GM12878 (cell line): ENCODE measurements at regions of chr5 and their contacts with region 1.

Region 1: GRCh38 chr5:112684737-112685136 is 52.9 kb upstream of the APC start:
- DNase-seq: no peak
- ATAC-seq: no peak; the same call in 2 of the 3 replicates
- H3K4me3 ChIP-seq: no peak overlapping the region
- H3K27ac ChIP-seq: no peak overlapping the region
- H3K4me1 ChIP-seq: peaks cover 10% of the 10 kb centered on the region
- H3K27me3 ChIP-seq: peaks cover 0 to 2% of the 10 kb centered on the region in 2 experiments; a peak in 1 of 4 replicates
- CTCF ChIP-seq: no peak
- EP300 ChIP-seq: no peak
- POLR2A ChIP-seq: no peak
- RAD21 ChIP-seq: no peak

Region 2: GRCh38 chr5:112642885-112643284 is 41.9 kb before region 1 on chr5:
- CTCF ChIA-PET with region 1: no interaction called
- POLR2A ChIA-PET with region 1: no interaction called
- RAD21 ChIA-PET with region 1: no interaction called
- SMC1A ChIA-PET with region 1: interaction called, 10 read pairs
- in situ Hi-C with region 1: no loop called
- intact Hi-C with region 1: no loop called
- DNase-seq: no peak
- ATAC-seq: no peak
- H3K4me3 ChIP-seq: no peak overlapping the region
- H3K27ac ChIP-seq: no peak overlapping the region
- H3K4me1 ChIP-seq: no peaks in the 10 kb centered on the region
- H3K27me3 ChIP-seq: no peaks in the 10 kb centered on the region
- CTCF ChIP-seq: no peak
- EP300 ChIP-seq: no peak
- POLR2A ChIP-seq: no peak
- RAD21 ChIP-seq: no peak

Region 3: DNA sequence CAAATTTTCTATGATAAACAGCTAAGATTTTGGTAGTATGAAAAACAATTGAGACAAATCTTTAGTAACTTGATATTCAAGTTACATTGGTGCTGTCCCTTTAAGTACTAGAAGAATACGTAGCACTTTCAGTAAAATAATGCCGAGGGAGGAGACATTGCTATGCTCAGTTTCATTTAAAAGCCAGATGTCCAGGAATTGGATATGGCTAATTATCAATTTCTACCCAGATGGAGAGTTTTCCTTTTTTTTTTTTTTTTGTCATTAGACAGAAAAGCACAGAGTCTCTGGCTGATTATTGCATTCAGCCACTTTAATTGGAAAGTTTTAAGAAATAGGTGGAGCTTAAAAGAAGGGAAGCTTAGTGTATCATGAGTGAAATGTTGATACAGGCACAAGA is 12.6 kb after region 1 on chr5:
- CTCF ChIA-PET with region 1: interaction called, 14 read pairs
- POLR2A ChIA-PET with region 1: interaction called, 9 read pairs
- RAD21 ChIA-PET with region 1: interaction called, 7 read pairs
- SMC1A ChIA-PET with region 1: interaction called, 20 read pairs
- in situ Hi-C with region 1: no loop called
- intact Hi-C with region 1: no loop called
- DNase-seq: no peak
- ATAC-seq: no peak
- H3K4me3 ChIP-seq: no peak overlapping the region
- H3K27ac ChIP-seq: no peak overlapping the region
- H3K4me1 ChIP-seq: peaks cover 4% of the 10 kb centered on the region; the same call in 1 of the 2 replicates
- H3K27me3 ChIP-seq: no peaks in the 10 kb centered on the region
- CTCF ChIP-seq: no peak
- EP300 ChIP-seq: no peak
- POLR2A ChIP-seq: no peak
- RAD21 ChIP-seq: no peak

Region 4: DNA sequence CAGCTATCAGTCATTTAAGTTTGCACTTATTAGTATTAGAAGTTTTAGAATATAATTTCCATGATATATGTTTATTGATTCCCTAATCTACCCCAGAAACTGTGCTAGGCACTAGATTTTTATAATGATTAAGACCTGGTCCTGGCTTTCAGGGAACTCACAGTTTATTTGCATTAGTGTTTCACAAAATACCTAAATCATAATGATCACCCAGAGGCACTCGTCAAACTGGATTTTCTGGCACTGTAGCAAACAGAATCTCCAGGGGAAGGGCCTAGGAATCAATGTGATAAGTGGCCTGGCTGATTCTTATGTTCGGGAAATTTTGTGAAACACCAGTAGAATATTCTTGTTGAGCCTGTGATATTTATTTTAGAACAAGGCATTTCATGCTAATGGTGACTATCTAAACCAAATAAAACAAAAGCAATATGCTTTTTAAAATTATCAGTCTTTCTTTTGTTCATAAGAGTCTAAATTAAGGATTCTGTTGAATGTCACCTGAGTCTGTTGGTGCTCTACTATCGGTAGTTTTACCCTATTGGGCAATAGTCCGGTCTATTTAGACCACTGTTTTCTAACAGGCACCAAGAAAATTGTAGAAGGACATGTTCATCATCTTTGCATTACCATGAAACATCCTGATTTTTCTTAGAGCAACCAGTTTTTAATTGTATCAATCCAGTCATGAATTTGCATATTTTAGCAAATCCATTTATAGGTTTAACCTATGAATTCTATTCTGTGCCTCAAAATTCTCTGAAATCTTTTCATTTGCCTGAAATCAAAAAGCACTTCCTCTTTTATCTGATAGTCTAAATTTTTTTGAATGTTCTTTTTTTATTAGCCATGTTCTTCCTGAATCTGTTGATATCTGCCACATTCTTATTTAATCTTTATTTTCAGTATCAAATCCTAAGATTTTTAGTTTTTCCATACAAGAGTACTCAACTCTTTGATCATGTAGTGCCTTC is 139.2 kb after region 1 on chr5:
- CTCF ChIA-PET with region 1: no interaction called
- POLR2A ChIA-PET with region 1: no interaction called
- RAD21 ChIA-PET with region 1: no interaction called
- SMC1A ChIA-PET with region 1: no interaction called
- in situ Hi-C with region 1: no loop called
- intact Hi-C with region 1: no loop called
- DNase-seq: no peak
- ATAC-seq: no peak
- H3K4me3 ChIP-seq: no peak overlapping the region
- H3K27ac ChIP-seq: no peak overlapping the region
- H3K4me1 ChIP-seq: no peaks in the 10 kb centered on the region
- H3K27me3 ChIP-seq: no peaks in the 10 kb centered on the region
- CTCF ChIP-seq: no peak
- EP300 ChIP-seq: no peak
- POLR2A ChIP-seq: no peak
- RAD21 ChIP-seq: no peak